SK-N-SH (cell line): ENCODE measurements at regions of chr1 and their contacts with region 1.

Region 1: GRCh38 chr1:201792534-201793305 is 36.2 kb upstream of the IPO9 start:
- DNase-seq: peak; percentile 85
- H3K4me3 ChIP-seq: peak overlapping the region in 1 of 2 experiments; percentile 4; a peak in 1 of 4 replicates
- H3K27ac ChIP-seq: peak overlapping the region; percentile 92 to 99
- H3K4me1 ChIP-seq: peaks cover 28 to 41% of the 10 kb centered on the region in 2 experiments
- H3K27me3 ChIP-seq: no peaks in the 10 kb centered on the region
- CTCF ChIP-seq: peak; percentile 98
- EP300 ChIP-seq: no peak
- RAD21 ChIP-seq: peak; percentile 99

Region 2: GRCh38 chr1:201530741-201531531 is 261.8 kb before region 1 on chr1:
- CTCF ChIA-PET with region 1: interaction called, 83 read pairs
- POLR2A ChIA-PET with region 1: no interaction called
- DNase-seq: peak; percentile 89
- H3K4me3 ChIP-seq: no peak overlapping the region
- H3K27ac ChIP-seq: peak overlapping the region in 1 of 2 experiments; percentile 62; a peak in 2 of 4 replicates
- H3K4me1 ChIP-seq: peaks cover 11 to 36% of the 10 kb centered on the region in 2 experiments; a peak in 3 of 4 replicates
- H3K27me3 ChIP-seq: no peaks in the 10 kb centered on the region
- CTCF ChIP-seq: peak; percentile 90
- EP300 ChIP-seq: no peak
- RAD21 ChIP-seq: peak; percentile 93

Region 3: DNA sequence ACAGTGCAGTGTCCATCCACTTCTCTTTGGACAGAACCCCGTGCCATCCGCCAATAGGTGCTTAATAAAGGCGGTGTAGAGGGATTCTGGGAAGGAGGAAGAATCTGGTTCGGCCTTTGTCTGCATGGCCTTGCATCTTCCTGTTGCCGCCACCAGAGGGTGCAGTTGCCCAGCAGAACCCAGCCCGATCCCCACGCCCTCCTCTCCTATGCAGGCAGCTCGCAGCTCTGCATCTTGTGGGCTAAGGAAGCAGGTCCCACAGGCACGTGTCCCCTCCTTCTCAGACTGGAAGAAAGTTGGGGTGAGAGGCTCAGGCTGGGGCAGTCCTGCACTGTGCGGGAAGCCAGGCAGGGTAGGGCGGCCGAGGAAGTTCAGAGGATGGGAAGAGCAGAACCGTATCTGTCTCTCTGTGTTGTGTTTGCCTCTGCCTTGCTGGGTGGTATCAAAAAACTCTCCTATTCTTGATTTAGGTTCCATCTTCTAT is 233.0 kb before region 1 on chr1:
- CTCF ChIA-PET with region 1: interaction called, 172 read pairs
- POLR2A ChIA-PET with region 1: no interaction called
- DNase-seq: peak; percentile 85
- H3K4me3 ChIP-seq: no peak overlapping the region; a peak in 1 of 4 replicates
- H3K27ac ChIP-seq: peak overlapping the region; percentile 51 to 95
- H3K4me1 ChIP-seq: peaks cover 60 to 71% of the 10 kb centered on the region in 2 experiments
- H3K27me3 ChIP-seq: no peaks in the 10 kb centered on the region
- CTCF ChIP-seq: peak; percentile 91
- EP300 ChIP-seq: no peak
- RAD21 ChIP-seq: peak; percentile 99

Region 4: DNA sequence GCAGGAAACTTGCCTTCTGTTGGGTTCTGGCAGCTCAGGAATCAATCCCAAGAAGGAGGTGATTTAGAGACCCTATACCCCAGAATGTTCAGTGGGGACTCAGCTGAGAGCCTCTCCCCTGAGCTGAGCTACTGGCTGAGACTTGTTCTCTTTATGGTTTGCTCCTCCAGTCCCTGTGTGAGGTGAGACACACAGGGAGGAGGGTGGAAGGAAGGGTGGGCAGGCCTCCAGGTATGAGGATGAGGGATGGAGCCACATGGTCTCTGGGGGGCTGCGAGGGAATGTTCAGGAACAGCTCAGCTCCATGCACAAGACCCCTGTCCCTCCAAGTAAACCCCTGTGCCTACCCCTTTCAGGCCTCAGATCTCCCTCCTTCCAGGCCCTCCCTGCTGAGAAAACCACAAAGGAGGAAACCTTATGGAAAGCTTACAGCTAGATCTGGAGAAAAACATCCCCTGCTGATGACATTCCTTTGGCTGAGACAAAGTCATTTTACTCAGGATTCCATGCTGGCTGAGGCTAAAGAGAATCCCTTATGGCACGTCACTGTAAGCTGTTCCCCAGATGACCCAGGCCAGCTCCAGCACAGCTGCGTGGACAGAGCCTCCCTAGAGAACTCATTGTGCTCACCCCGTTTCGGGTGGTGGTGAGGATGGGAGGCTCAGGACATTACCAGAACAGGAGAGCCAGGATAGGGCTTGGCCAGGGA is 55.2 kb before region 1 on chr1:
- CTCF ChIA-PET with region 1: interaction called, 827 read pairs
- POLR2A ChIA-PET with region 1: no interaction called
- DNase-seq: no peak
- H3K4me3 ChIP-seq: no peak overlapping the region; a peak in 1 of 4 replicates
- H3K27ac ChIP-seq: peak overlapping the region; percentile 54 to 98; a peak in 3 of 4 replicates
- H3K4me1 ChIP-seq: peaks cover 25 to 51% of the 10 kb centered on the region in 2 experiments; a peak in 3 of 4 replicates
- H3K27me3 ChIP-seq: no peaks in the 10 kb centered on the region
- CTCF ChIP-seq: no peak
- EP300 ChIP-seq: no peak
- RAD21 ChIP-seq: no peak

Region 5: DNA sequence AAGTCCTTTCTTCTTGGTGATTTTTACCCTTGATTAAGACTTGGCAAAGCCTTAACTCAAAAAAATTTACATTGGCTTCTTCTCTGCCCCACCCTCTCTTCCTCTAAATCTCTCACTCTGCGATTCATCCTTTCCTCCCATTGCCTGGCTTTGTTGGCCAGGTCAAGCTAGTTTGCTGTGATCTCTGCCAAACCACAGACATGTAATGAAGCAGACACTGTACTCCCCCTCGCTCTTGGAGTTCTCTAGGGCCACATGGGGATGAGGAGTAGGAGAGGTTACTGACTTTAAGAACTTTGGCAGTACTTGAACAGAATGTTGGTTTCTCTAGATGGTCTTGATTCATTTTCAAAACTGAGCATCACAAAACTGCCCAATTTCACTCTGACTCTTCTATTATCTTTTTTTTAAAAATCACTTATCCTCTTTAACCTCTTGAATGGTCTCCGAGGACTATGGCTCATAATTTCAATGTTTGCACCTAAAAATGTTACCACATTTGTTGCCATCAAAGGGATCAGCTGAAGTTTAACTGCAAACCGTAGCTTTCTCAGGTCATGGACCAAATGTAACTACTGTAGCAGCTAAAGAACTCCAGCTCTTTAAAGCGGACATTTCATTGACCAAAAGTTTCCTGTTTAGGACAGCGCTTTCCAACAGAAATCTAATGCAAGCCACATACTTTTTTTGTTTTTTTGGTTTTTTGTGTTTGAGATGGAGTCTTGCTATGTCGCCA is 26.4 kb before region 1 on chr1:
- CTCF ChIA-PET with region 1: interaction called, 44 read pairs
- POLR2A ChIA-PET with region 1: no interaction called
- DNase-seq: no peak
- H3K4me3 ChIP-seq: no peak overlapping the region
- H3K27ac ChIP-seq: peak overlapping the region; percentile 87 to 98
- H3K4me1 ChIP-seq: peaks cover 14 to 64% of the 10 kb centered on the region in 2 experiments
- H3K27me3 ChIP-seq: no peaks in the 10 kb centered on the region
- CTCF ChIP-seq: no peak
- EP300 ChIP-seq: peak in 1 of 2 experiments; percentile 90; a peak in 3 of 4 replicates
- RAD21 ChIP-seq: no peak

Region 6: DNA sequence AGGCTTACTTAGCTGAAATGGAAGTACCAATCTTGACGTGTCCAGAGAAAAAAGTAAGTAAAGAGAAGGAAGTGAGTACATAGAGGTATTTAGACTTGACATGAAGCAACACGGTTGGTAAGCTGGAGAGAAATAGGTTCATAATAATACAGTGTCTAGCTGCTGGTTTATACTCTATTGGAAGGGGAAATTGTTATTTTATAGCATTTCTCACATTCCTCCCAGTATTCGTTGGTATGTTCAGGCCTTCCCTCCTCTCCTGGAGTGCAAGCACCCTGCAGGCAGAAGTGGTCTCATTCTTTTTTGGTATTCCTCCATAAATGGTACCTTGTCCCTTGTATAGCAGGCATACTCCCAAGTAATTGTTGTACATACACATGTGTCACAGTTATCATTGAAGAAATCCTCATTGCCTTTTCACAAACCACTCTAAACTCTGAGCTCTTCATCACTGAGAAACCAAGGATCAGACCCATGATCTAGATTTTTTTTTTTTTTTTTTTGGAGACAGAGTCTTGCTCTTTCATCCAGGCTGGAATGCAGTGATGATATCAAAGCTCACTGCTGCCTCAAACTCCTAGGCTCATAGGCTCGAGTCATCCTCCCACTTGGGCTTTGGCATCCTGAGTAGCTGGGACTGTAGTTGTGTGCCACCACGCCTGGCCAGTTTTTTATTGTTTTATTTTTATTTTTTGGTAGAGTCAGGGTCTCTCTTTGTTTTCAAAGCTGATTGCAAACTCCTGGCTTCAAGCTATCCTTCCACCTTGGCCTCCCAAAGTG is 26.4 kb after region 1 on chr1:
- CTCF ChIA-PET with region 1: interaction called, 37 read pairs
- POLR2A ChIA-PET with region 1: no interaction called
- DNase-seq: no peak
- H3K4me3 ChIP-seq: no peak overlapping the region
- H3K27ac ChIP-seq: peak overlapping the region in 1 of 2 experiments; percentile 22; a peak in 1 of 4 replicates
- H3K4me1 ChIP-seq: no peaks in the 10 kb centered on the region; a peak in 1 of 4 replicates
- H3K27me3 ChIP-seq: no peaks in the 10 kb centered on the region
- CTCF ChIP-seq: no peak
- EP300 ChIP-seq: no peak
- RAD21 ChIP-seq: no peak

Region 7: GRCh38 chr1:201937624-201938213 is 145.0 kb after region 1 on chr1:
- CTCF ChIA-PET with region 1: no interaction called
- POLR2A ChIA-PET with region 1: no interaction called
- DNase-seq: no peak
- H3K4me3 ChIP-seq: no peak overlapping the region
- H3K27ac ChIP-seq: peak overlapping the region in 1 of 2 experiments; percentile 52; a peak in 2 of 4 replicates
- H3K4me1 ChIP-seq: no peaks in the 10 kb centered on the region; a peak in 1 of 4 replicates
- H3K27me3 ChIP-seq: no peaks in the 10 kb centered on the region
- CTCF ChIP-seq: no peak
- EP300 ChIP-seq: no peak
- RAD21 ChIP-seq: no peak